ENCODE measurements at regions of chr12 and their contacts with region 1.

Region 1: GRCh38 chr12:15590180-15590826 is 198.9 kb downstream of the EPS8 start:
- DNase-seq: peak; percentile 22 to 92 (median 48)

Region 2: GRCh38 chr12:15494329-15495046 is 95.8 kb before region 1 on chr12:
- intact Hi-C with region 1: no loop called
- DNase-seq: no peak

Region 3: DNA sequence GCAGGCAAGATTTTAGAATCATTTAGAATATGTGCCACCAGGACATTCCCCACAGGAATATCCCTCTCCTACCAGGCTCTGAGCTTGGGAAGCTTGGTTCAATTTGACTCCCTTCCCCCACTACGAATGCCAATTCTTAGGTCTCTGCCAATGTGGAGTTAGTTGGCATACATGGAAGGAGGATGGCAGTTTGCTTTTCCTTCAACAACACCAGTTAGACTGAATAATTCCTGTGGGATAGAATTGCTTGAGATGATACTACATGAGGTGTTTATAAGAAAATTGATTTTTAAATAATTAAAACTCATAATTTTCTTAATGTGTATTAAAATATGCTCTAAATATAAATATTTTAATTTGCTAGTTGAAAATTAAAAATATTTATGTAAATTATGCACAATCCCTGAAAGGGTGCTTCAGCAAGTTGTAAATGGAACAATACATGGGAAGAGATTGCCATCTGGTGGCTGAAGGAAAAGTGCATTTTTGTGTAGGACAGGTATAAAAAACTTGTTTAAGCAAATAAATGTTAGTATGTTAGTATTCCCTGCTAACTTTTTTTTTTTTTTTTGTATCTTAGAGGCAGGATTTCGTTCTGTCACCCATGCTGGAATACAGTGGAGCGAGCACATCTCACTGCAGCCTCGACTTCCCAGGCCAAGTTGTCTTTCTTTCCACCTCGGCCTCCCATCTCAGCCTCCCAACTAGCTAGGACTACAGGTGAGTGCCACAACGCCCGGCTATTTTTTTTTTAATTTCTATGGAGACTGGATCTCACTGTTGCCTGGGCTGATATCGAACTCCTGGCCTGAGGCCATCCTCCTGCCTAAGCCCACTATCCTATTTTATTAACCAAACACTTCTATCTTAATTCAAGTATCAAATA is 266.0 kb after region 1 on chr12:
- intact Hi-C with region 1: loop called (anchors 1 kb)
- DNase-seq: peak in 2 of 10 donors; percentile 18 to 50

Measured in posterior cingulate gyrus (tissue), 11 donors.